Dorsolateral prefrontal cortex (tissue), 120 donors: ENCODE measurements at regions of chr3 and their contacts with region 1.

Region 1: GRCh38 chr3:20511863-20512505 is 326.0 kb upstream of the SGO1 start:
- DNase-seq: peak in 1 of 10 donors; percentile 28
- H3K4me3 ChIP-seq: no peak overlapping the region
- H3K27ac ChIP-seq: no peak overlapping the region
- H3K27me3 ChIP-seq: no peaks in the 10 kb centered on the region
- CTCF ChIP-seq: peak; percentile 33 to 82 (median 68)

Region 2: DNA sequence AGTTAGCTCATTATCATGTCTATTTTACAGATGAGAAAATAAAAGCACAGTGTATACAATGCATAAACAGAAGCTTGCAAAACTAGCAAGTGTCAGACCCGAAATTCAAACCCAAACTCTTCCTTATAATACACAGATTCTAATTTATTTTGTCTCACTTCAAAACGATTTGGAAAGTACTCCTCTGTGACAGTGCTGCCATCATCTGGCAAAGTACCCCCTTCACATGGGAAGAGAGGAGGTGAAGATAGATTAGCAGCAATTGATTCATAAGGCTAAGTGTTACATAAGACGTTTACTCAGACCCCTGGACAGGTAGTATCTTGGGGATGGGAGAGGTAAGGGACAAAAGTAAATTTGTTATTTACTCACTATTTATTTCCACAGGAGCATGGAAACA is 418.1 kb after region 1 on chr3:
- intact Hi-C with region 1: loop called in 1 of 2 experiments (anchors 10 kb)
- DNase-seq: no peak
- H3K4me3 ChIP-seq: no peak overlapping the region
- H3K27ac ChIP-seq: no peak overlapping the region
- H3K27me3 ChIP-seq: no peaks in the 10 kb centered on the region
- CTCF ChIP-seq: peak in 35 of 56 donors; percentile 10 to 53 (median 27)

Region 3: DNA sequence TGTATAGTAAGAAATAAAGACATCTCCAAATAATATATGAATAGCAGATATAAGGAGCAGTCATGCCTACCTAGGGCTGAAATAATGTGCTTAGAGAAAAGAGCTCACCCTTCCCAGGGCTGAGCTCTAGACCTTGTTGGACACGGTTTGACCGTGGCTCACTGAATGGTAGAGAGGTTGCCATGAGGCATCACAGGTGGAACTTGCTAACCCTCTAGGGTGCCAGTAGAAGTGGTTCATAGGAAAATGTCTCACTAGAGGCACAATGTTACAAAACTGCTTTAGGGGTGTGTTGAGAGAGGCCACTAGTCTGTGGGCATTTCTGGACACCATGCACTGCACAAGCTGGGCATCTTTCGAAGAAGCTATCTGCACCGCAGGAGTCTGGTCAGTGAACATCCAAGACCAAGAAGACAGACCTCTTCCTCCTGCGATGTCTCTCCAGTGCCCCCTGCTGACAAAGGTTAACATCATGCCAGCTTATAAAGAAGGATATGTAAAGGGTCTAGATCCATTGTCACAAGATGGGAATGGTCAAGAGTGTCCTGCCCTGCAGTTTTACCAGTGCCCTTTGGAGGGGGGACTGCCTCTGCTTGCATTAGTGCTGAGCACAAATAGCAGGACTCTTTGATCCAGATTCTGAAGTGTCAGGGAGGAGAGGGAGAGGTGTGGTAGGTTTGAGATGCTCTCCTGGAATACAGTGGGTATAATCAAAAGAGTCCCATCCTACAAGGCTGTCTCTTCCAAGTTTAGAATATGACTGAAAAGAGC is 972.3 kb after region 1 on chr3:
- intact Hi-C with region 1: loop called in 1 of 2 experiments (anchors 5 kb)
- DNase-seq: peak in 6 of 10 donors; percentile 19 to 51 (median 44)
- H3K4me3 ChIP-seq: no peak overlapping the region
- H3K27ac ChIP-seq: no peak overlapping the region
- H3K27me3 ChIP-seq: no peaks in the 10 kb centered on the region
- CTCF ChIP-seq: peak; percentile 28 to 70 (median 54)

Region 4: DNA sequence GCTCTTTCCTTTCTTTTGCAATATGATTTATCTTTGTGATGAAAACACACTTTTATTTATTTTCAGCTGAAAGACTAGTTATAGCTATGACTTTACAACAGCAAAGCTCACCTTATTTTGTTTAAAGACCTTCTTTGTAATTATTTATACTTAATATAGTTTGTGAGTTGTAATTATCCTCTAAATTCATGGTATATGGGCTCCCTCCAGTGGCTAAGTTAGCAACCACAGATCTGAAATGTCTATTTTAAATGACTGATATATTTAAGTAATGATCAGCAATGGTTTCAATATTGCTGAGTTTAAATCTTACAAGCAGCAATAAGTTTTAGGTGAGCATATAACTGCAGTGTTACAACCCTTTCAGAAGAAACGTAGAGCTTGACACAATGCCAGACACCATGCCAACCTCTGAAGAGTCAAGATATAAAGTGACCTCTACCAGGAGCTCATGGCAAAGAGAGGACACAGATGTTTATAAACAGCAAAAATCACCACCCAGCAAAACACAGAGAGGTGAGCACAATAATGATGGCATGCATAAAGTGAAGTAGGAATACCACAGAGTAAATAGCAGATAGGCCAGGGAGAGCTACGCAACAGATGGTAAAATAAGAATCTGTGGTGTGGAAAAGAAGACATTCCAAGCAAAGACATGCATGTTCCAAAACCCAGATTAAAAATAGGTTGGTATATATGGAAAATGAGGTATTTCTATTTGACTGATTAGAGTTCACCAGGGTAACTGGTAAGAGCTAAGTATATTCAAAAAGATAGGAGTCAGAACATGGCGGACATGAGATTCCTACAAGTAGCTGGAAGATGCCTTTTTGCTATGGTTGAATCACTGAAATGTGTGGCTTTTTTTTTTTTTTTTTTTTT is 1382.7 kb after region 1 on chr3:
- intact Hi-C with region 1: loop called in 1 of 2 experiments (anchors 10 kb)
- DNase-seq: no peak
- H3K4me3 ChIP-seq: no peak overlapping the region
- H3K27ac ChIP-seq: no peak overlapping the region
- H3K27me3 ChIP-seq: no peaks in the 10 kb centered on the region
- CTCF ChIP-seq: peak; percentile 41 to 83 (median 62)

Region 5: GRCh38 chr3:22117751-22118346 is 1605.9 kb after region 1 on chr3:
- intact Hi-C with region 1: loop called in 1 of 2 experiments (anchors 5 kb)
- DNase-seq: no peak
- H3K4me3 ChIP-seq: no peak overlapping the region
- H3K27ac ChIP-seq: no peak overlapping the region
- H3K27me3 ChIP-seq: no peaks in the 10 kb centered on the region
- CTCF ChIP-seq: peak; percentile 35 to 87 (median 70)